Spleen (tissue), 13 donors: ENCODE measurements at regions of chr12 and their contacts with region 1.

Region 1: DNA sequence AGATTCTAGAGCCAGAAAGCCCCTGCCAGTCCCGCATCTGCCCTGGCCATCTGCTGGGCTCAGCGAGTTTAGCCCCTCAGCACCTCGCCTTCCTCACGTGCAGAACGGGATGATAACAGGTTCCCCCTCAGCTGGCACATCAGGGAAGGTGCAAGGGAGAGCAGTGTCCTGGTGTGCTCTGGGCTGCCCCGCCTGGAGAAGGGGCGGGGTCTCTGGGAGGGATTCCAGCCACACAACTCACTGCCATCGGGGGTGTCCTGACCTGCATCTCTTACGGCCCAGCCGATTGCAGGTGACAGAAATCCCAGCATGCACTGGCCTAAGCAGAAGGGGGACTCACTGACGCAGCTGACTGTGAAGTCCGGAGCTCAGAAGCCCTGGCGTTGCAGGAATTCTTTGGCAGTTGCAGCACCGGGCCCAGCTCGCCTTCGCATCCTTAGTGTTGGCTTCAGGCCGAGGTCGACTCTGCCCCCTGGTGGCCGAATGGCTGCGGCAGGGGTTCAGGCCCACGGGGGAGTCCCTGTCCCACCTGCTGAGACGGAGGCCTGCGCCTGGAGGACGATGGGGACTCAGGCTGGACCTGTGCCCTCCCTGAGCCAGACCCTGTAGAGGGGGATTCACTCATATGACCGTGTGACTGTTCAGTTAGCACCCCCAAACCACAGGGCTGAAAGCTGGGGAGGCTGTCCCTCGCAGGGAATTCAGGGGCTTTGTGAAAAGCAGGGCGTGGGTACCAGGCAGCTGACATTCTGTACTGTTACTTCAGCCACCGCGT is 178.6 kb downstream of the ADGRD1 start:
- DNase-seq: peak; percentile 92
- H3K4me3 ChIP-seq: no peak overlapping the region
- H3K27ac ChIP-seq: no peak overlapping the region
- H3K4me1 ChIP-seq: peaks cover 0 to 8% (median 5%) of the 10 kb centered on the region in 6 donors
- H3K27me3 ChIP-seq: peaks cover 0 to 19% (median 0%) of the 10 kb centered on the region in 7 donors
- CTCF ChIP-seq: peak; percentile 62 to 90 (median 76)
- POLR2A ChIP-seq: no peak

Region 2: GRCh38 chr12:130916251-130916911 is 215.9 kb before region 1 on chr12:
- intact Hi-C with region 1: loop called (anchors 5 kb)
- DNase-seq: peak; percentile 78
- H3K4me3 ChIP-seq: peak overlapping the region in 1 of 8 donors; percentile 19
- H3K27ac ChIP-seq: no peak overlapping the region
- H3K4me1 ChIP-seq: peaks cover 0 to 8% (median 0%) of the 10 kb centered on the region in 6 donors
- H3K27me3 ChIP-seq: peaks cover 0 to 44% (median 8%) of the 10 kb centered on the region in 7 donors
- CTCF ChIP-seq: peak; percentile 33 to 83 (median 66)
- POLR2A ChIP-seq: no peak

Region 3: DNA sequence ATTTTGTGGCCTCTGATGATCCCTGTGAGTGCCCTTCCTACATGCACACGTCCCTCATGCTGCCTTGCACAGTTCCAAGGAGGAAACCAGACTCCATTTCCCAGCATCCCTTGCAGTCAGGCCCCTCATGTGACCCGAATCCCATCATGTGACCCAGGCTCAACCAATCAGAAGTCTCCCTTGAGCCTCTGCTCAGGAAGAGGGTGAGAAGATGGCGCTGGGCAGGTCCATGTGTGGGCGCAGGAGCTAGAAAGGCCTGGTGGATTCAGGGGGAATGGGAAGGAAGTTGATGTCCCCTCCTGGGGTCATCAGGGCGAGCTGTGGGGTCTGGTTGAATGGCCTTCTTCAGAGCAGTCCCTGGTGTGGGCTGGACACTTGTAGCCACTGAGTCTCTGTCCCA is 61.9 kb after region 1 on chr12:
- intact Hi-C with region 1: no loop called
- DNase-seq: no peak
- H3K4me3 ChIP-seq: no peak overlapping the region
- H3K27ac ChIP-seq: no peak overlapping the region
- H3K4me1 ChIP-seq: no peaks in the 10 kb centered on the region
- H3K27me3 ChIP-seq: peaks cover 0 to 18% (median 0%) of the 10 kb centered on the region in 7 donors
- CTCF ChIP-seq: no peak
- POLR2A ChIP-seq: no peak